WTC11 (cell line): ENCODE measurements at regions of chr19 and their contacts with region 1.

Region 1: DNA sequence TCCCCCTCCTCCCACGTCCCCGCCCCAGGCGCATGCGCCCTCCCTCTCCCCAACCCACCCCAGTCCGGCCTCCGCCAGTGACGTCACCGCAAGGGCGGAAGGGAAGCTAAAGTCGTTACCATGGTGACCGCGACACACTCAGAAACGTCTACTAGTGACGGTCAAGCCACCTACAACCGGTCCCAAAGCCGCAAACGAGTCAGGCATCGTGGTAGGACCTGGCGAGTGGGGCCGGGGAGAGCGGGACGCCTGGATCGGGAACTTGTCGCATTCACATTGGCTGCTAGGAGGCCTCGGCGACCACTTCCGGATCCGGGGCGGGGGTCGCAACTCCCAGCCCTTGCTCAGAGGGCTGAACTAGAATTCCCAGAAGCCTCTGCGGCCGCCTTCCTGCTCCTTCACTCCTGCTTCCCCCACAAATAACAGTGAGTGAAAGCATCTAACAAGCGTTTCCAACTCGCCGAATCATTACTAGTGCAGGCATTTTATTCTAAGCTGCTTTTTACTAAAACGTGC is at the start of gene ZSCAN5A:
- DNase-seq: peak; percentile 92
- ATAC-seq: peak; percentile 80
- H3K4me3 Mint-ChIP-seq: peak within 1 kb of the TSS; percentile 95
- H3K27ac Mint-ChIP-seq: peak within 1 kb of the TSS; percentile 100
- H3K4me1 Mint-ChIP-seq: peaks cover 12% of the 10 kb centered on the region
- H3K27me3 Mint-ChIP-seq: no peaks in the 10 kb centered on the region
- CTCF ChIP-seq: no peak
- total RNA-seq, gene ZSCAN5A: 9.0 to 10.4 TPM (median 9.8 TPM) in 3 replicates

Region 2: DNA sequence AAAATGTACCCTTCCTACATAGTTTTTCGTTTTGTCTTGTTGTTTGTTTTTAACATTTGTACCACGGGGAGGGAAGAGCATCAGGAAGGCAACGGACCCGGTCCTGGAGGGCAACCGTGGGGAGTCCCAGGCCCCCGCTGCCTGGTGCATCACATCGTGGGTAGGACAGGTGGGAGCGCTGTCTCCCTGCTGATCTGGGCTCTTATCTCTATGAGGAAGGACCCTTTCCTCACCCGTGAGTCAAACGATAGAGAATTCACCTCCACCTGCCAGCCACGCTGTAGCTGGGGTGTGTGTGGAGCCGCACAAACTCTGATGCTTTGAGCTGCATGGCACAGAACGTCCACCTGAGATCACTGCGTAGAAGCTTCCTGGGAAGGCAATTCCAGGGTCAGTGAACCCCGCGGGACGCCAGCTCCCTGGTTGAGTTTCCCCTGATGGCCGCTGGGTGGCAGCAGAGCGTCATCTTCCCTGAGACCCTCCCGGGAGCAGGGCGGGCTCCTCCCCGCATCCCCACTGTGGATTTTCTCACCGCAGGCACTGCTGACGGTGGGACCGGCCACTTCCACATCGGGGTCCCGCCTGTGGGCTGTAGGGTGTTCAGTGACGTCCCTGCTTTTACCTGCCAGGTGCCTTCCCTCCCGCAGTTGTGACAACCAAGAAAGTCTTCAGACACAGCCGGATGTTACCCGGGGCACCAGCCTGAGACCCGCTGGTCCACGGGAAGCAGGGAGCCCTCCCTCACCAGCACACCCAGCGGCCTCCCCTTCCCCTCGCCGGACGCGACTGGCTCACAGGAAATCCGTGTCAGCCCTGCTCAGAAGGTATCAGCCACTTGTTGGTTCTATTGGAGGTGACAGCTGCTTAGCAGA is 248.2 kb before region 1 on chr19:
- CTCF ChIA-PET with region 1: interaction called, 26 read pairs
- POLR2A ChIA-PET with region 1: no interaction called
- DNase-seq: peak; percentile 86
- ATAC-seq: peak; percentile 90
- H3K4me3 Mint-ChIP-seq: peak overlapping the region; percentile 59
- H3K27ac Mint-ChIP-seq: no peak overlapping the region
- H3K4me1 Mint-ChIP-seq: peaks cover 3% of the 10 kb centered on the region; the same call in 1 of the 2 replicates
- H3K27me3 Mint-ChIP-seq: peaks cover 24% of the 10 kb centered on the region
- CTCF ChIP-seq: peak; percentile 90

Region 3: DNA sequence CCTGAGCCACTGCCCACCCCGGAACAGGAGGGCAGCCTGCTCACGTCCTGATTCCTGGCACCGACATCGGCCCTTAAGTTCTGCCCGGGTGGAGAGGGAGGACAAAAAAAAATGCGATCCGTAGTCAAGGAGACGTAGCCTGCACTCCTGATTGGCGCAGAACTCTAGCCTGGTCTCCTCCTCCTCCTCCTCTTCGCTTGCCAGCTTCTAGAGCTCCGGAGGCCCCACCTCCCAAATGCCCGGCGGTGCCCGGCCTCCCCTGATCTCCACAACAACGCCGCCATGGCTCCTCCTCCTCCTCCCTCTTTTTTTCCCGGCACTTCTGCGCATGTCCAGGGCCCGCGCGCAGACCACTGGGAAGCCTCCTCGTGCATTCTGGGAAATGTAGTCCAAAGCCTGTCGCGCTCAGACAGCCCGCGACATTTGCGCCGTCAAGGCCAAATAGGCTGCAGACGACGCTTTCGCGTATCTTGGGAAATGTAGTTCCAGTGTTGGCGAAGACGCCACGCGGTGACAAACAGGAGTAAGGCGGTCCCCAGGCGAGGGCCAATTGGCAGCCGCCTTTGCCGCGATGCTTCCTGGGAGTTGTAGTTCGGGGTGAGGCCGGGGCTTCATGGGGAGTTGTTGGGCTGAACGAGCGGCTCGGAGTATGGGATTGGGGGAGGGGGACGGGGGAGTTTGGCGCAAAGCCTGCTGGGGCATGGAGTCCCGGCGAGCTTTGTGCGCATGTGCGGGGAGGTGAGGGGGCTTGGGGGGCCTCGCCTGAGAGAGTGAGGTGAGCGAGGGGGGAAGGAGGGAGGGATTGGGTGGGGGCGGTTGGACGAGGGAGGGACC is 173.8 kb before region 1 on chr19 and contains the start of gene ZNF444:
- CTCF ChIA-PET with region 1: interaction called, 19 read pairs
- POLR2A ChIA-PET with region 1: no interaction called
- DNase-seq: peak; percentile 99
- ATAC-seq: peak; percentile 93
- H3K4me3 Mint-ChIP-seq: peak within 1 kb of the TSS; percentile 79
- H3K27ac Mint-ChIP-seq: peak within 1 kb of the TSS; percentile 95
- H3K4me1 Mint-ChIP-seq: peaks cover 37% of the 10 kb centered on the region
- H3K27me3 Mint-ChIP-seq: peaks cover 3% of the 10 kb centered on the region; the same call in 1 of the 2 replicates
- CTCF ChIP-seq: no peak
- total RNA-seq, gene ZNF444: 84.0 to 87.9 TPM (median 87.7 TPM) in 3 replicates

Region 4: DNA sequence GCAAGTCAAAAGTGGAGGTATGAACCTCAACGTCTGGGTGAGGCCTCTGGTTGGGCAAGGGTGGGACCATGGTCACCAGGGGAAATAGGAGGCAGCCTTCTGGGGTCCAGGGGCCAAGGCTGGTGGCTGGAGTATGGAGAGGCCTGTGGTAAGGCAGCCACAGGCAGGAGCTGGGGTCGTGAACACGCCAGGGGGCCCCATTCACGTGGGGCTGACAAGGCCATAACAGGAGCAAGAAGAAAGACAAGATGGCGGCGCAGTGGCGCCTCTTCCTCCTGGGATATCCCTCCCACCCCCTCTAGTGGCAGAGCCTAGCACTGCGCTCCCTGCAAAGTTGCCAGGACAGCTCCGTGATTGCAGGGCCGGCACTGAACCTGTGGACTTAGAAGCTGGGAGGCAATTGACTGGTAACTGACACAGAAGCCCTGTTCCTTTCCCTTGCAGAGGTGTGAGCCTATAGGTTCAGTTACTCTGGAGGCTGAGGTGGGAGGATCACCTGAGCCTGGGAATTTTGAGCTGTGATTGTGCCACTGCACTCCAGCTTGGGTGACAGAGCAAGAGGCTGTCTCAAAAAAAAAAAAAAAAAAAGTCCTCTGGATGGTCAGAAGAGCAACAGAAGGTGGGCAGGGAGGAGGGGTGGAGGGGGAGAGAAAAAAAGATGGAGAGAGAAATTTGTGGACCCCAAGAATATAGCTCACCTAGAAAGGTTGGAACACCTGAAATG is 61.8 kb before region 1 on chr19:
- CTCF ChIA-PET with region 1: interaction called, 44 read pairs
- POLR2A ChIA-PET with region 1: no interaction called
- DNase-seq: peak; percentile 96
- ATAC-seq: peak; percentile 97
- H3K4me3 Mint-ChIP-seq: no peak overlapping the region
- H3K27ac Mint-ChIP-seq: no peak overlapping the region
- H3K4me1 Mint-ChIP-seq: no peaks in the 10 kb centered on the region
- H3K27me3 Mint-ChIP-seq: peaks cover 12% of the 10 kb centered on the region; the same call in 1 of the 2 replicates
- CTCF ChIP-seq: peak; percentile 91

Region 5: DNA sequence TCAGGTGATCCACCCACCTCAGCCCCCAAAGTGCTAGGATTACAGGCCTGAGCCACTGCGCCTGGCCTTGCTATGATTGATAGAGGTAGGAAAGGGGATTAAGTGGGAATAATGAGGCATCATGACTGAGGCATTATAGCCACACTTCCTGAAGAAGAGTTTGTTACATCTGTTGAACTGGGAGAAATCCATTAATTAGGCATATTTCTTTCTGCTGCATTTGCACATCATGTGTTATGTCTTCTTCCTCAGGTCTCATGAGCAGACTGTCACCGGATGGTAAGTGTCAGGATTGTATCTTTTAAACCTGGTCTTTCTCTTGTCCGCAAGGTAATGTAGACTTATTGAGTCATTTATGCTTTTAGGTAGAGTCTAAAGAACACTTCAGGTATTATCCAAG is 29.9 kb before region 1 on chr19:
- CTCF ChIA-PET with region 1: interaction called, 13 read pairs
- POLR2A ChIA-PET with region 1: no interaction called
- DNase-seq: no peak
- ATAC-seq: no peak
- H3K4me3 Mint-ChIP-seq: no peak overlapping the region
- H3K27ac Mint-ChIP-seq: no peak overlapping the region
- H3K4me1 Mint-ChIP-seq: no peaks in the 10 kb centered on the region
- H3K27me3 Mint-ChIP-seq: no peaks in the 10 kb centered on the region
- CTCF ChIP-seq: no peak

Region 6: GRCh38 chr19:56333505-56333904 is 18.9 kb after region 1 on chr19:
- CTCF ChIA-PET with region 1: interaction called, 43 read pairs
- POLR2A ChIA-PET with region 1: no interaction called
- DNase-seq: peak; percentile 37
- ATAC-seq: peak; percentile 73
- H3K4me3 Mint-ChIP-seq: no peak overlapping the region
- H3K27ac Mint-ChIP-seq: no peak overlapping the region
- H3K4me1 Mint-ChIP-seq: no peaks in the 10 kb centered on the region
- H3K27me3 Mint-ChIP-seq: peaks cover 14% of the 10 kb centered on the region
- CTCF ChIP-seq: peak; percentile 41; the same call in 1 of the 2 replicates